ENCODE measurements at regions of chr1 and their contacts with region 1.

Region 1: DNA sequence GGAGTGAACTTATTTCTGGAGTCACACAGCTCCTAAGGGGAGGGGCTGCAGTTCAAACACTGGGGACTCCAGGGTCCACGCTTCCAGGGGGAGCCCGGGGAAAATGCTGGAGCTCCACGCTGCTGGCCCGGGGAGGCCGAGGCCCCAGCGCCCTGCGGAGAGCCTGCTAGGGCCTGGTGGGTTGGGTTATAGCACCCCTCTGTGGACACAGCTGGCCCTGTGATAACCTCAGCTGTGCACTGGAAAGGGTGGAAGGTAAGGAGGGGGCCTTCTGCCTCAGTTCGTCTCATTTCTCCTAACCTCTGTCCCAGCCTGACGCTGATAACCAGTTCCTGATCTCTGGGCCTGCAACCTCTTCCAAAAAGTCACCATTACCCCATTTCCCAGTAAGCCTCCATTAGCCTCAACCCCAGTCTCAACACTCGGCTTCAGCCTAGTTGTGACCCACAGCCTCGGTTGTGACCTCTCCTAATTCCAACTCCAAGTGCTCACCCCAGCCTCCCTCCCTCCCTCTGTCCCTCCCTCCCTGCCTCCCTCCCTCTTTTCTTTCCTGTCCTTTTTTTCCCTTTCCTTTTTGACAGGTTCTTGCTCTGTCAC is 7.1 kb downstream of the NBL1 start:
- DNase-seq: peak in 1 of 2 donors; percentile 45
- ATAC-seq: peak; percentile 53 to 67
- H3K4me3 ChIP-seq: peak overlapping the region in 1 of 4 donors; percentile 2
- H3K27ac ChIP-seq: peak overlapping the region; percentile 61 to 79 (median 74)
- H3K4me1 ChIP-seq: peaks cover 5 to 26% of the 10 kb centered on the region in 2 donors
- H3K27me3 ChIP-seq: no peaks in the 10 kb centered on the region
- CTCF ChIP-seq: peak; percentile 64 to 80 (median 71)
- POLR2A ChIP-seq: no peak

Region 2: GRCh38 chr1:19311959-19312781 is 339.1 kb before region 1 on chr1 and contains the starts of genes AKR7A2 and SLC66A1:
- in situ Hi-C with region 1: no loop called
- intact Hi-C with region 1: loop called (anchors 10 kb)
- DNase-seq: peak; percentile 85 to 92
- ATAC-seq: peak; percentile 87 to 91
- H3K4me3 ChIP-seq: peak within 1 kb of the TSS; percentile 79 to 97 (median 87)
- H3K27ac ChIP-seq: peak within 1 kb of the TSS; percentile 93 to 97 (median 96)
- H3K4me1 ChIP-seq: peaks cover 19 to 20% of the 10 kb centered on the region in 2 donors
- H3K27me3 ChIP-seq: no peaks in the 10 kb centered on the region
- CTCF ChIP-seq: peak; percentile 13 to 36 (median 17)
- POLR2A ChIP-seq: peak; percentile 91 to 92
- total RNA-seq, gene AKR7A2: 45.4 to 80.2 (median 60.2) TPM
- total RNA-seq, gene SLC66A1: 13.9 to 30.0 (median 19.3) TPM

Region 3: DNA sequence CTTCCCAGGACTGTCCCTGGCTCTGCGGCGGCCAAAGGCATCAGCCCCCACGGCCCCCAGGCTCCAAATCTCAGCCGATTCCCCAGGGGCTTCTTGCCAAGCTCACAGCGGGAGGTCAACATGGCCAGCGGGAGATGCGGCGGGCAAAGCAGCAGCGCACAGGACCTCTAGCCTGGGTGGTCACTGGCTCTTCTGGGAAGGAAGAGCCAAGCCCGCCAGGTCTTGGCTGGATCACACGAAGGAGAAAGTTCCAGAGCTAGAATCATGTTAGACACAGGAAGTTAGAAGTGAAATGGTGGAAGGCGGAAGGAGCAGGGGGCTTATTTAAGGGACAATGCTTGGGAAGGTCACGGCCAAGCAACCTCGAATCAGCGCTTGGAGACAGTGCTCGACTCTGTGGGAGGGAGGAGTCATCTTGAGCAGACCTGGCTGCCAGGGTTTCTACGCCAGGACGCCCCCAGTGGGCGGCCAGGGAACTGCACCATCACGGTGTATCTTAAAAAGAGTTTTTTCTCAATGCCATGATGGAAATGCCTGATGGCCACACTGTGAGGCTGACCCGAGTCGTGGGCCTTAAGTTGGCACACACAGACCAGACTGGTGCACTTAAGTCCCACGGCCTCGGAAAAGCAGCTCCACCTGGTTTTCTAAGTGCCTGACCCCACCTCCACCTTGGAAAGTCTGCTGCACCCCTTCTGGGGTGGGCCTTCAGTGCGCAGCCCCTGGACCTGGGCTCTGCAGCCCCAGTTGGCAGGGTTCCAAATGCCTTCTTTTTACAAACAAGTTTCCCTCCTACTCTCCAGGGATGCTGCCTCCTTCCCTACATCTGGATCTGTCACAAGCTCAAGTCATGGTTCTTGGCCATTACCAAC is 309.8 kb before region 1 on chr1:
- in situ Hi-C with region 1: loop called in 3 of 4 experiments (anchors 5 to 10 kb)
- intact Hi-C with region 1: loop called (anchors 1 kb)
- DNase-seq: peak in 1 of 2 donors; percentile 68
- ATAC-seq: peak; percentile 35 to 68
- H3K4me3 ChIP-seq: no peak overlapping the region
- H3K27ac ChIP-seq: peak overlapping the region in 2 of 4 donors; percentile 30 to 33
- H3K4me1 ChIP-seq: no peaks in the 10 kb centered on the region
- H3K27me3 ChIP-seq: no peaks in the 10 kb centered on the region
- CTCF ChIP-seq: peak; percentile 67 to 88 (median 78)
- POLR2A ChIP-seq: no peak

Region 4: GRCh38 chr1:19384113-19384512 is 267.1 kb before region 1 on chr1:
- in situ Hi-C with region 1: loop called in 1 of 4 experiments (anchors 10 kb)
- intact Hi-C with region 1: loop called (anchors 2 kb)
- DNase-seq: no peak
- ATAC-seq: no peak
- H3K4me3 ChIP-seq: no peak overlapping the region
- H3K27ac ChIP-seq: no peak overlapping the region
- H3K4me1 ChIP-seq: peaks cover 16 to 17% of the 10 kb centered on the region in 2 donors
- H3K27me3 ChIP-seq: no peaks in the 10 kb centered on the region
- CTCF ChIP-seq: no peak
- POLR2A ChIP-seq: no peak

Region 5: DNA sequence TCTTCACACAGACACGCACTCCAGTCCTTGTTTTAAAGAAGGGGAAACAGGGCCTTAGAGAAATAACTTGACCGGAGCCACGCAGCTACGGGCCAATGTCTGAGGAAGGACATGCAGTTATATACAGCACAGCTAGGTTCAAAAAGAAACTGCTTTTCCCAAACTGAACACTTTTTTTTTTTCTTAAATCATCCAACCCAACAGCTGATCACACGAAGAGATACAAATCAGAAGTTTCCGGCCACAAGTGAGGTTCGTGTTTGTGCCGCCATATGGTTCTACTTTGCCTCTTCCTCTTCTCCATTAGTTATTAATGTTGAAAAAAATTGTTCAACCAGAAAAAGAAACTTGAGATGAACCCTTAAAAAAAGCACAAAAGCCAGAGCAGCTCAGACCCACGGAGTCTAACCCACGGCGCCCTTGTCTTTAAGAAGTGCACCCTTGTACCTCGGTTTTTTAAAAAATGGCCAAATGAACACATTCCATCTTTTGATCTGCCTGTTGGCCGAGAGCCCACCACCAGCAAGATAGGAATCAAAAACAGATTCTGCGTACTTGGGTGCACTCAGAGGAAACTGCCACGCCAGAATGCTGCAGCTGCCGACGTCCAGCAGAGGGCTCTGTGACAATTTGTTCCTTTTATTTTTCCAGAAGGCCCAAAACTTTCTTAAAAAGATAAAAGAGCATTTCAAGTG is 260.2 kb before region 1 on chr1:
- in situ Hi-C with region 1: loop called in 1 of 4 experiments (anchors 10 kb)
- intact Hi-C with region 1: loop called (anchors 2 kb)
- DNase-seq: peak in 1 of 2 donors; percentile 31
- ATAC-seq: peak; percentile 33 to 50
- H3K4me3 ChIP-seq: no peak overlapping the region
- H3K27ac ChIP-seq: peak overlapping the region; percentile 38 to 71 (median 52)
- H3K4me1 ChIP-seq: peaks cover 22 to 24% of the 10 kb centered on the region in 2 donors
- H3K27me3 ChIP-seq: no peaks in the 10 kb centered on the region
- CTCF ChIP-seq: peak; percentile 70 to 83 (median 75)
- POLR2A ChIP-seq: no peak